AG04450 (cell line): ENCODE measurements at regions of chr9 and their contacts with region 1.

Region 1: GRCh38 chr9:35553670-35554543 is 51.2 kb upstream of the TESK1 start:
- DNase-seq: peak; percentile 44
- H3K4me3 ChIP-seq: no peak overlapping the region
- H3K27ac ChIP-seq: no peak overlapping the region
- H3K27me3 ChIP-seq: no peaks in the 10 kb centered on the region
- CTCF ChIP-seq: peak; percentile 90

Region 2: DNA sequence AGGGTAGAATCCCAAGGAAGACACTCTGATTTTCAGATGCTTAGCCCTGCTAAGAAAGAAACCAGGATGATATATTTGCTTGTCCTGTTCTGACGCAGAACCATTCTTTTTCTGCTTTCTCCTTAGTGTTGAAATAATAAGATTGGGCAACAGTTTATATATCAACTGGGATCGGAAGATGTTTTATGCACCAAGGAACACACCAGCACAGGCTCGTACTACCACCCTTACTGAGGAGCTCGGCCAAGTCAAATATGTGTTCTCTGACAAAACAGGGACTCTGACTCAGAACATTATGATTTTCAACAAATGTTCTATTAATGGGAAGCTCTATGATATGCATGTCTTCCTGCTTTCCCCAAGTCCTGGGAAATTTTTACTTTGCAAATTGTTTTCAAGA is 83.0 kb before region 1 on chr9:
- CTCF ChIA-PET with region 1: interaction called, 151 read pairs
- POLR2A ChIA-PET with region 1: no interaction called
- DNase-seq: peak; percentile 62
- H3K4me3 ChIP-seq: no peak overlapping the region
- H3K27ac ChIP-seq: no peak overlapping the region
- H3K27me3 ChIP-seq: peaks cover 6% of the 10 kb centered on the region
- CTCF ChIP-seq: no peak

Region 3: DNA sequence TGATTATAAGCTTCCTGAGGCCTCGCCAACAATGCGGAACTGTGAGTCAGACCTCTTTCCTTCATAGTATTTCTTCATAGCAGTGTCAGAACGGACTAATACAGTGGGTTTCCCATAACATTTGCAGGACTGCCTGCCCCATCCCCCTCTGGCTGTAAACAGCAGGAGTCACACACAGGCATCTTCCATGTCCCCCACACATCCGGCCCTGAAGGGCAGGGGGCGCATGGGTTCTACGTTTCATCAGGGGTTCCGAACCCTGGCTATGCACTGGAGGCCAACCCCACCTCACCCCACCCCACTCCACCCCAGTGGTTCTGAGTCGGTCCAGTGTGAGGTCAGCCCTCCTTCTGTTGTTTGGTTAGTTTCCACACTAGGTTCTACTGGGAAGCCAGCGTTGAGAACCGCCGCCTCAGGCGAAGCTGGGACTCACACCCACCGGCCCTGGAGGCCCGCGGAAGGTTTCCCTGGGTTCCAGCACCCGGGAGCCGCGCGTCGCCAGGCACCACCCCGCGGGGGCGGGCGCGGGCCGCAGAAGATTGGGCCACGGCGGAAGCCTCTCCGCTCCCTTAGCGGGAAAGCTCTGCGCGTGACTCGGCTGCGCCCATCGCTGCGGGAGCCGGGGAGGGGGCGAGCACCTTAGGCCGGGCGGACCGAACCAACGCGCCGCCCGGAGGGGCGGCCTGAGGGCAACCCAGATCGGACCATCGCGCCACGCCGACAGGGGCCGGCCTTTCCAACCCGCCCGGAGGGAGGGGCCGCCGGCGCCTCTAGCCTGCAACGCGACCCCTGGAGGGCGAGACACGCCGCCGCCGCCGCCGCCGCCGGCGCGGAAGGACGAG is 64.4 kb before region 1 on chr9 and contains the start of gene RUSC2:
- CTCF ChIA-PET with region 1: interaction called, 50 read pairs
- POLR2A ChIA-PET with region 1: interaction called, 17 read pairs
- DNase-seq: peak; percentile 84
- H3K4me3 ChIP-seq: peak within 1 kb of the TSS; percentile 89
- H3K27ac ChIP-seq: peak within 1 kb of the TSS; percentile 95
- H3K27me3 ChIP-seq: no peaks in the 10 kb centered on the region
- CTCF ChIP-seq: peak; percentile 53
- polyA plus RNA-seq, gene RUSC2: 17.4 and 19.3 TPM in 2 replicates

Region 4: GRCh38 chr9:35518226-35518821 is 35.6 kb before region 1 on chr9:
- CTCF ChIA-PET with region 1: interaction called, 21 read pairs
- POLR2A ChIA-PET with region 1: interaction called, 8 read pairs
- DNase-seq: peak; percentile 88
- H3K4me3 ChIP-seq: no peak overlapping the region
- H3K27ac ChIP-seq: peak overlapping the region; percentile 92
- H3K27me3 ChIP-seq: no peaks in the 10 kb centered on the region
- CTCF ChIP-seq: no peak

Region 5: DNA sequence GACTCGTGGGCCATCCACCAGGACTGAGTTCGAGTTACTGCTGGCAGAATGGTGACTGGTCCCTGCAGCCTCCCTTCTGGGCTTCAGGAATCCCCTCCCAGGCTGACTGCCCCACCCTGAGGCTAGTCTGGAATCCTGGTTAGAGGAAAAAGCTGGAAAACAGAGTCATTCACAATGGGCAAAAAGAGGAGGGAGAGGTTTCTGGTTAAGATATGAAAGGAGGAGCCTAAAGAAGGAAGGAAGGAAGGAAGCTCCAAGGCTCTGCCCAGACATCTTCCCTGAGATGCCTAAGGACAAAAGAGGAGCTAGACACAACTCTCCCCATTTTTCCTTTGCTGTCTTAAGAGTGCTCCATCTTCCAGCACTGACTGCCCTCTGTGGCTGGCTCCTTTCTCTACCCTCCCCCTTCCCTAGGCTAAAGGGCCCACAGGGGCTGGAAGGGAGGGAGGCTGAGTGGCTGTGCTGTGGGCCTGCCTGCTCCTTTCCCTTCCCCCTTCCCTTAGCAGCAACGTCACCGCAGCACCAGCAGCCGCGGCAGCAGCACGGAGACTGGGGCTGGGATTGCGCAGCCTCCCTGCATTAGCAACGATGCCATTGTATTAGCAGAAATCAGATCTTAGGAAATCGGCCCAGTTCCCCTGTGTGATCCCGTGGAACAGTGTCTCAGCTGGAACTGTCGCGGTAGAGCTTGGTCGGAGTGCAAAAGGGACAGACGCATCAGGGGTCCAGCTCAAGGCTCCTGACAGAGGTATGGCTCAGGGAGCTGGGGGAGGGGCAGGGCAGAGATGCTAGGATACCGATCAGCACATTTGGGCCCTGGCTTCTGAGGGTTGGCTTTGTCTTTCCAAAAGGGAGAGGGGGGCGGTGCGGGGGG is 15.3 kb before region 1 on chr9:
- CTCF ChIA-PET with region 1: interaction called, 27 read pairs
- POLR2A ChIA-PET with region 1: interaction called, 5 read pairs
- DNase-seq: no peak
- H3K4me3 ChIP-seq: peak overlapping the region; percentile 77
- H3K27ac ChIP-seq: peak overlapping the region; percentile 95
- H3K27me3 ChIP-seq: no peaks in the 10 kb centered on the region
- CTCF ChIP-seq: no peak

Region 6: GRCh38 chr9:35636135-35636876 is 82.4 kb after region 1 on chr9:
- CTCF ChIA-PET with region 1: no interaction called
- POLR2A ChIA-PET with region 1: no interaction called
- DNase-seq: no peak
- H3K4me3 ChIP-seq: no peak overlapping the region
- H3K27ac ChIP-seq: no peak overlapping the region
- H3K27me3 ChIP-seq: no peaks in the 10 kb centered on the region
- CTCF ChIP-seq: no peak